ENCODE measurements at regions of chr1 and their contacts with region 1.

Region 1: DNA sequence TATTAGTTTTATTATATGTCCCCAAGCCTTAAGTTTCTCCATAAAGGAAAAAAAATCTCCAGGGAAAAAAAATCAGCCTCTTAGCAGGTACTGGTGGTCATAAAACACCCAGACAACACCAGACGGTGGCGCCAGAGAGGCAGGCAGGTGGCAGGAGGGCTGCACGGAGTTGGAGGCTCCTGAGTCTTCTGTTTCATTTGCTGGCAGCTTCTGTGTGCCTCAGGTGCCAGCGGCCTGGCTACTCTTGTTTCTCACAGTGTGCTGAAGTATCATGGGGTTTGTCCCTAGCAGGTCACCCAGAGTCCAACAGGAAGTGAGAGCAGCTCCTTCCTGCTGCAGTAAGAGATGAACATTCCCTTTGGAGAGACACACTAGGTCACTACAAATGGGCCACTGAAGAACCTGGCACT is 123.3 kb upstream of the GADD45A start:
- DNase-seq: peak; percentile 56 to 81 (median 66)
- H3K4me3 ChIP-seq: no peak overlapping the region
- H3K4me3 Mint-ChIP-seq: no peak overlapping the region
- H3K27ac ChIP-seq: no peak overlapping the region
- H3K27ac Mint-ChIP-seq: no peak overlapping the region
- H3K4me1 ChIP-seq: no peaks in the 10 kb centered on the region
- H3K4me1 Mint-ChIP-seq: no peaks in the 10 kb centered on the region
- H3K27me3 ChIP-seq: peaks cover 5% of the 10 kb centered on the region
- H3K27me3 Mint-ChIP-seq: peaks cover 6 to 25% of the 10 kb centered on the region in 2 donors

Region 2: DNA sequence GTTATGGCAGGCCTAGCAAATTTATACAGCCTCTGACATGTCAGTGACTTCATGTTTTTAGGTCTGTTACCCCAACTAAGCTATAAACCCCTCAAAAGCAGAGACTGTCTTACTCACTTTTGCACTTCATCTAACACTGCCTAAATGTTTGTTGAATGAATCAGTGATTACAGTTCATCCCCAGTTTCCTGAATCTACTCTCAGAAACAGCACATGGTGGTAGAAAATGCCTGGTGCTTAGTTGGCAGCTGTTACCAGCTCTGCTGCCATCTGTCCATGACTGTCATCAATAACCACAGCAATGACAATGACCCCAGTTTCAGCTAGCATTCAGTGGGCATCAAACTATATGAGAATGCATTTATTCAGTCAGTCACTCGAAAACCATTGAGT is 21.0 kb before region 1 on chr1:
- CTCF ChIA-PET with region 1: interaction called, 15 read pairs
- POLR2A ChIA-PET with region 1: no interaction called
- DNase-seq: no peak
- H3K4me3 ChIP-seq: no peak overlapping the region
- H3K4me3 Mint-ChIP-seq: no peak overlapping the region
- H3K27ac ChIP-seq: no peak overlapping the region
- H3K27ac Mint-ChIP-seq: no peak overlapping the region
- H3K4me1 ChIP-seq: no peaks in the 10 kb centered on the region
- H3K4me1 Mint-ChIP-seq: no peaks in the 10 kb centered on the region
- H3K27me3 ChIP-seq: no peaks in the 10 kb centered on the region
- H3K27me3 Mint-ChIP-seq: peaks cover 0 to 2% of the 10 kb centered on the region in 2 donors

Region 3: GRCh38 chr1:67582625-67583461 is 21.1 kb after region 1 on chr1:
- CTCF ChIA-PET with region 1: no interaction called
- POLR2A ChIA-PET with region 1: no interaction called
- DNase-seq: no peak
- H3K4me3 ChIP-seq: no peak overlapping the region
- H3K4me3 Mint-ChIP-seq: no peak overlapping the region
- H3K27ac ChIP-seq: no peak overlapping the region
- H3K27ac Mint-ChIP-seq: no peak overlapping the region
- H3K4me1 ChIP-seq: no peaks in the 10 kb centered on the region
- H3K4me1 Mint-ChIP-seq: no peaks in the 10 kb centered on the region
- H3K27me3 ChIP-seq: no peaks in the 10 kb centered on the region
- H3K27me3 Mint-ChIP-seq: peaks cover 0 to 5% of the 10 kb centered on the region in 2 donors

Region 4: GRCh38 chr1:67766141-67766978 is 204.7 kb after region 1 on chr1:
- CTCF ChIA-PET with region 1: interaction called, 138 read pairs
- POLR2A ChIA-PET with region 1: no interaction called
- DNase-seq: peak in 4 of 5 donors; percentile 10 to 50 (median 27)
- H3K4me3 ChIP-seq: no peak overlapping the region
- H3K4me3 Mint-ChIP-seq: peak overlapping the region in 6 of 7 donors; percentile 30 to 78 (median 67)
- H3K27ac ChIP-seq: no peak overlapping the region
- H3K27ac Mint-ChIP-seq: no peak overlapping the region
- H3K4me1 ChIP-seq: no peaks in the 10 kb centered on the region
- H3K4me1 Mint-ChIP-seq: peaks cover 0 to 4% (median 1%) of the 10 kb centered on the region in 3 donors
- H3K27me3 ChIP-seq: peaks cover 3% of the 10 kb centered on the region
- H3K27me3 Mint-ChIP-seq: peaks cover 11 to 45% of the 10 kb centered on the region in 2 donors

Region 5: GRCh38 chr1:67880056-67880601 is 318.4 kb after region 1 on chr1:
- CTCF ChIA-PET with region 1: no interaction called
- POLR2A ChIA-PET with region 1: no interaction called
- DNase-seq: no peak
- H3K4me3 ChIP-seq: no peak overlapping the region
- H3K4me3 Mint-ChIP-seq: no peak overlapping the region
- H3K27ac ChIP-seq: no peak overlapping the region
- H3K27ac Mint-ChIP-seq: no peak overlapping the region
- H3K4me1 ChIP-seq: no peaks in the 10 kb centered on the region
- H3K4me1 Mint-ChIP-seq: no peaks in the 10 kb centered on the region
- H3K27me3 ChIP-seq: no peaks in the 10 kb centered on the region
- H3K27me3 Mint-ChIP-seq: peaks cover 5 to 25% of the 10 kb centered on the region in 2 donors

Measured in CD8-positive, alpha-beta memory T cell (primary cell).